ENCODE measurements at regions of chr17 and their contacts with region 1.

Region 1: GRCh38 chr17:1606352-1607033 is 22.1 kb downstream of the SLC43A2 start:
- DNase-seq: no peak
- H3K4me3 Mint-ChIP-seq: no peak overlapping the region
- H3K27ac Mint-ChIP-seq: peak overlapping the region; percentile 98
- H3K4me1 Mint-ChIP-seq: peaks cover 30% of the 10 kb centered on the region
- H3K27me3 Mint-ChIP-seq: no peaks in the 10 kb centered on the region

Region 2: DNA sequence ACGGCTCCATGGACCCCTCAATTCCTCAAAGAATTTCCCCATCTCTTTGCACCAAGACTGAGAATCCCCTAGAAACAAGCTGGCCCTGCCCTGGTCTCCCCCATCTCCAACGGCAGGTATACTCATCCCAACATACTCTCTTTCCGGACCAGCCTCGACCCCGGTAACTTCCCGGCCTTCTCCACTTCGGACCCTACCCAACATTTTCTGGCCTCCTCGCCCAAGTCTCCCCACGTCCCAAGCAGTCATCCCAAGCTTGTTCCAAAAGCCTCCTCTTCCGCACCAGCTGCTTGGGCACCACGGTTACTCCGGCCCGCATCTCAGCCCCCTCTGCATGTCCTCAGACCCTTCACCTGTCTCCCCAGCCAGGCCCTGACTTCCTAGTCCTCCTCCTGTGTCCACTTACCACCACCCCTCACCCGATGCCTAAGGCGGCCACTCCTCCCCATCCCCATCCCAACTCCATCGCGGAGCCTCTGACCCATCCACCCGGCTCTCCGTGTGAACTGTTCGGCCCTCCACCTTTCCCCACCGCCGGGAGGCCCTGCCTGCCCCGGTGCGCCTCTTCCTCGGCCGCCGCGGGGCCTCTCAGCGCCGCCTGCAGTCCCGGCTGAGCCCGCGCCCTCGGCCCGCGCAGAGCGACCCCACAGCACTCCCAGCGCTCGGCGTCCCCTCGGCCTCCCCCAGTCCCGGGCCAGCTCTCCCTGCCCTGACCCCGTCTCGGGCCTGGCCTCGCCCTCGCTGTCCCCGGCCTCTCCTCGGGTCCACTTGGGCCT is 44.9 kb before region 1 on chr17:
- intact Hi-C with region 1: loop called (anchors 1 kb)
- DNase-seq: peak; percentile 30
- H3K4me3 Mint-ChIP-seq: peak overlapping the region; percentile 79
- H3K27ac Mint-ChIP-seq: no peak overlapping the region
- H3K4me1 Mint-ChIP-seq: peaks cover 22% of the 10 kb centered on the region
- H3K27me3 Mint-ChIP-seq: no peaks in the 10 kb centered on the region